ENCODE measurements at regions of chr2 and their contacts with region 1.

Region 1: GRCh38 chr2:10122386-10123280 is at the start of gene RRM2:
- DNase-seq: peak; percentile 82 to 97 (median 93)

Region 2: GRCh38 chr2:10302479-10303180 is 180.0 kb after region 1 on chr2 and contains the start of gene HPCAL1:
- intact Hi-C with region 1: loop called (anchors 10 kb)
- DNase-seq: peak; percentile 49 to 93 (median 86)

Region 3: GRCh38 chr2:10434886-10435819 is 312.5 kb after region 1 on chr2:
- intact Hi-C with region 1: loop called (anchors 2 kb)
- DNase-seq: peak; percentile 43 to 89 (median 76)

Region 4: GRCh38 chr2:10668402-10669012 is 545.9 kb after region 1 on chr2:
- intact Hi-C with region 1: loop called (anchors 5 kb)
- DNase-seq: peak in 8 of 42 donors; percentile 14 to 56 (median 35)